ENCODE measurements at regions of chr6 and their contacts with region 1.

Region 1: DNA sequence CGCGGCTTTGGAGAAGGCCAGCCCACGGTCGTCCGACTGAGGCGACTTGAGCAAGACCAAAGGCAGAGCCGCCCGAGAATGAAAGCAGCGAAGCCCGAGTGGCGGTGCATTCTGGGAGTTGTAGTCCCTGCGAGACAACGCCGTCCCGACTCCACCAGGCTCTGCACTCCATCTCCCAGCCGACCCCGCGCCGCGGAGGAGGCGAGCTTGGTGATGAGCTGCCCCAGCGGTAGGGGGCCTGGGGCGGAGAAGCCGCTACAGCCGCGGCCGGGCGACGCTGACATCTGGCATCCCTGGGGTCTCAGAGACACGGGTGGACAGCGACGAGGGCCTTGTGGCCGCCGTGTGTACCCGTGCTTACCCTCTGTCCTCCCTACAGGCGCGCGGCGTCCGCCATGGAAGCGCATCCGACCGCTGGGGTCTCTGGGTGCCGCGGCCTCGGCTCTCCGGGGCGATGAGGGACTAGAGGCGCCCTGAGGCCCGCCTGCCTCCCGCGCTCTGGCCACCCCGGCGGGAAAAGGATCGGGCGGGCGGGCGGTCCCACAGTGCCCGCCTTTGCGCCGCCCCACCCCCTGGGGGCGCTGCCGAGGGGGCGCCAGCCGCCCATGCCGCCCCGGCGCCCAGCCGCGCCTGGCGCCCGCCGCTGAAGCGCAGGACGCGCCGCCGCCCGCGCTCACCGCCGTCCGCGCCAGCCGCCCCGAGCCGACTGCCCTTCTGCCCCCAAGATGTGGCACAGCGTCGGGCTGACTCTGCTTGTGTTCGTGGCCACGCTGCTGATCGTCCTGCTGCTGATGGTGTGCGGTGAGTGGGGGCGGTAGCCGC is at the start of gene SMIM13:
- DNase-seq: peak; percentile 92 to 96
- ATAC-seq: peak; percentile 91 to 97 (median 91)
- H3K4me3 ChIP-seq: peak within 1 kb of the TSS; percentile 98
- H3K4me3 Mint-ChIP-seq: peak within 1 kb of the TSS; percentile 99
- H3K27ac ChIP-seq: peak within 1 kb of the TSS; percentile 99
- H3K27ac Mint-ChIP-seq: peak within 1 kb of the TSS; percentile 94 to 96
- H3K4me1 ChIP-seq: peaks cover 17% of the 10 kb centered on the region
- H3K4me1 Mint-ChIP-seq: peaks cover 22 to 29% of the 10 kb centered on the region in 2 donors
- H3K27me3 ChIP-seq: no peaks in the 10 kb centered on the region
- H3K27me3 Mint-ChIP-seq: peaks cover 0 to 4% of the 10 kb centered on the region in 2 donors
- CTCF ChIP-seq: peak; percentile 75
- total RNA-seq, gene SMIM13: 5.3 to 10.3 (median 9.8) TPM

Region 2: GRCh38 chr6:10837995-10838793 is 255.6 kb before region 1 on chr6 and contains the start of gene MAK:
- intact Hi-C with region 1: loop called (anchors 2 kb)
- DNase-seq: peak; percentile 83 to 94
- ATAC-seq: peak; percentile 96 to 98 (median 97)
- H3K4me3 ChIP-seq: peak within 1 kb of the TSS; percentile 34
- H3K4me3 Mint-ChIP-seq: peak within 1 kb of the TSS; percentile 82
- H3K27ac ChIP-seq: no peak within 1 kb of the TSS
- H3K27ac Mint-ChIP-seq: peak within 1 kb of the TSS; percentile 60 to 86
- H3K4me1 ChIP-seq: peaks cover 21% of the 10 kb centered on the region
- H3K4me1 Mint-ChIP-seq: peaks cover 22 to 23% of the 10 kb centered on the region in 2 donors
- H3K27me3 ChIP-seq: peaks cover 40% of the 10 kb centered on the region
- H3K27me3 Mint-ChIP-seq: peaks cover 53 to 77% of the 10 kb centered on the region in 2 donors
- CTCF ChIP-seq: no peak
- total RNA-seq, gene MAK: 0.41 to 0.66 (median 0.65) TPM

Region 3: GRCh38 chr6:11120271-11121005 is 26.6 kb after region 1 on chr6:
- intact Hi-C with region 1: no loop called
- DNase-seq: no peak
- ATAC-seq: no peak
- H3K4me3 ChIP-seq: no peak overlapping the region
- H3K4me3 Mint-ChIP-seq: no peak overlapping the region
- H3K27ac ChIP-seq: no peak overlapping the region
- H3K27ac Mint-ChIP-seq: no peak overlapping the region
- H3K4me1 ChIP-seq: no peaks in the 10 kb centered on the region
- H3K4me1 Mint-ChIP-seq: peaks cover 11 to 34% of the 10 kb centered on the region in 2 donors
- H3K27me3 ChIP-seq: no peaks in the 10 kb centered on the region
- H3K27me3 Mint-ChIP-seq: no peaks in the 10 kb centered on the region
- CTCF ChIP-seq: no peak

Region 4: GRCh38 chr6:11194356-11195218 is 100.8 kb after region 1 on chr6:
- intact Hi-C with region 1: no loop called
- DNase-seq: no peak
- ATAC-seq: no peak
- H3K4me3 ChIP-seq: no peak overlapping the region
- H3K4me3 Mint-ChIP-seq: no peak overlapping the region
- H3K27ac ChIP-seq: no peak overlapping the region
- H3K27ac Mint-ChIP-seq: peak overlapping the region; percentile 98 to 99
- H3K4me1 ChIP-seq: peaks cover 30% of the 10 kb centered on the region
- H3K4me1 Mint-ChIP-seq: peaks cover 56 to 57% of the 10 kb centered on the region in 2 donors
- H3K27me3 ChIP-seq: no peaks in the 10 kb centered on the region
- H3K27me3 Mint-ChIP-seq: no peaks in the 10 kb centered on the region
- CTCF ChIP-seq: no peak

Region 5: DNA sequence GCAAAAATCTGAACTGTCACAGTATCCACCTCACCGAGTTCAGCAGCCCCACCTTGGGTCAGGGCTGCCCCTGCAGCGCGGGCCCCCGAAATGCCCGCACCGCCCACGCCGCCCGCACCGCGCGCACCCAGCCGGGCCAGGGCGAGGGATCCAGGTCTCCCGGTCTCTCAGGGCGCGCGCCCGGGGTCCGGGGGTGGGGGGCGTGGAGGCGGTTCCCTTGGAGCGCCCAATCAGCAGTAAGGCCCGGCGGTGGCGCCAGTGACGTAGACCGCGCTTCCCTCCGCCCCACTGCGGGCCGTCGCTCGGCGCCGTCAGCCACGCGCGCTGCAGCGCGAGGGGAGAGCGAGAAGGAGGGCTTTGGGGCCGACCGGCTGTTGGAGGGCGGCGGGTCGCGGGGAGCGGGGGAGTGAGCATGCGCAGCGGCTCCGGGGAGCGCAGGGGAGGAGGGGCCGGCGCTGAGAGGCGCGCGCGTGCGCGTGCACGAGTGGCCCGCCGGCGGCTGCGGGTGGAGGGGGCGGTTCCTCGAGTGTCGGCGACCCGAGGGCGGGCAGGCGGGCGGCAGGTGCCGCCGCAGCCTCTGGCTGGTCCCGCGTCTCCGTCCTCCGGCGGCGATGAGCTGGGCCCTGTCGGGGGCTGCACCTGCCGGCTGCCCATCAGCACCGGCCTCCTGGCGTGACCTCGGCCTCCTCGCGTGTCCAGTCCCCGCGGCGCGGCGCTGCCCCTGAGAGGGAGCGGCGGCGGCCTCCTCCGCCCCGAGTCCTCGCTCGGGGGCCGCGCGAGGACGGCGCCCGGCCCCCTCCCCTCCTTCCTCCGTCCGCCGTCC is 443.6 kb after region 1 on chr6 and contains the start of gene TMEM170B:
- intact Hi-C with region 1: loop called (anchors 1 kb)
- DNase-seq: peak; percentile 98
- ATAC-seq: peak; percentile 90 to 97 (median 91)
- H3K4me3 ChIP-seq: peak within 1 kb of the TSS; percentile 59
- H3K4me3 Mint-ChIP-seq: peak within 1 kb of the TSS; percentile 91
- H3K27ac ChIP-seq: peak within 1 kb of the TSS; percentile 53
- H3K27ac Mint-ChIP-seq: peak within 1 kb of the TSS; percentile 82 to 83
- H3K4me1 ChIP-seq: peaks cover 6% of the 10 kb centered on the region
- H3K4me1 Mint-ChIP-seq: peaks cover 13% of the 10 kb centered on the region in 2 donors
- H3K27me3 ChIP-seq: no peaks in the 10 kb centered on the region
- H3K27me3 Mint-ChIP-seq: peaks cover 4 to 6% of the 10 kb centered on the region in 2 donors
- CTCF ChIP-seq: no peak
- total RNA-seq, gene TMEM170B: 1.8 to 3.6 (median 2.5) TPM

Region 6: GRCh38 chr6:12621754-12622153 is 1528.0 kb after region 1 on chr6:
- intact Hi-C with region 1: no loop called
- DNase-seq: no peak
- ATAC-seq: no peak
- H3K4me3 ChIP-seq: no peak overlapping the region
- H3K4me3 Mint-ChIP-seq: no peak overlapping the region
- H3K27ac ChIP-seq: no peak overlapping the region
- H3K27ac Mint-ChIP-seq: no peak overlapping the region
- H3K4me1 ChIP-seq: no peaks in the 10 kb centered on the region
- H3K4me1 Mint-ChIP-seq: no peaks in the 10 kb centered on the region
- H3K27me3 ChIP-seq: no peaks in the 10 kb centered on the region
- H3K27me3 Mint-ChIP-seq: peaks cover 0 to 5% of the 10 kb centered on the region in 2 donors
- CTCF ChIP-seq: no peak

Measured in natural killer cell (primary cell).